ENCODE measurements at regions of chr2 and their contacts with region 1.

Region 1: DNA sequence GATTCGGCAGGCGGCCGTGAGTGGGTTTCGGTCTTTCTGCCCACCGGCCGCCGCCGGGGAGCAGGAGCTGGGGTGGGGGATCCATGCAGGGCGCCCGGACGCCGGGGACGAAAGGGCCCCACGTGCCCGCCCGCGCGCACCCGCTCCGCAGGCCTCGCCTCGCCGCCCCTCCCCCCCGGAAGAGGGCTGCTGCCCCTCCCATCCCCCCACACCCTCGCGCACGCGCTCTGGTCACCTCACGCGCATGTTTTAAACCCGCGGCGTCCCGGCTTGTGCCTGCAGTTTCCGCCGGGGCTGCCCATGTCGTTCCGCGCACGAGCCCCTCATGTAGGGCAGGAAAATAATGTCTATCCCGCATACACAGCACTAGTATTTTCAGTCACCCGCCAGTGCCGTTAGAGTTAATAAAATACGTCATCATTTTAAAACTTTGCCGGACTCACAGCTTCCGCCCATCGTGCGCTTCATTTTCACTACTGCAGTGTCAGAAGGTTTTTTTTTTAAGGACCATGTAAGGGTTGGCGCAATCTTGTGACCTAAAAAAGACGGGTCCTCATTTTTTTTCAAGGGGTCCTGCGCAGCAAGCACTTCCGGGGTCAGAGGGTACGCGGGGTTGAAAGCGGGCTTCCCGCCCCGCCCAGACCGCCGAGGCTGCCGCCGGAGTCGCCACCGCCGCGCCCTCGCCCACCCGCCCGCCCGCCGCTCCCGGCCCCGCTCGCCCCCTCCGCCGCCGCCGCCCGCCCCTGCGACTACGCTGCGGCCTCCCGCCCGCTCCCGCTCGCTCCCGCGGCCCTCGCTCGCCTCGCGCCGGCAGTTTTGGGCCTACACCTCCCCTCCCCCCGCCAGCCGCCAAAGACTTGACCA is at the start of gene PCBP1:
- DNase-seq: peak; percentile 96
- H3K4me3 Mint-ChIP-seq: peak within 1 kb of the TSS; percentile 97
- H3K27ac Mint-ChIP-seq: peak within 1 kb of the TSS; percentile 100
- H3K4me1 Mint-ChIP-seq: peaks cover 50% of the 10 kb centered on the region
- H3K27me3 Mint-ChIP-seq: no peaks in the 10 kb centered on the region
- total RNA-seq, gene PCBP1: 363 to 374 TPM

Region 2: DNA sequence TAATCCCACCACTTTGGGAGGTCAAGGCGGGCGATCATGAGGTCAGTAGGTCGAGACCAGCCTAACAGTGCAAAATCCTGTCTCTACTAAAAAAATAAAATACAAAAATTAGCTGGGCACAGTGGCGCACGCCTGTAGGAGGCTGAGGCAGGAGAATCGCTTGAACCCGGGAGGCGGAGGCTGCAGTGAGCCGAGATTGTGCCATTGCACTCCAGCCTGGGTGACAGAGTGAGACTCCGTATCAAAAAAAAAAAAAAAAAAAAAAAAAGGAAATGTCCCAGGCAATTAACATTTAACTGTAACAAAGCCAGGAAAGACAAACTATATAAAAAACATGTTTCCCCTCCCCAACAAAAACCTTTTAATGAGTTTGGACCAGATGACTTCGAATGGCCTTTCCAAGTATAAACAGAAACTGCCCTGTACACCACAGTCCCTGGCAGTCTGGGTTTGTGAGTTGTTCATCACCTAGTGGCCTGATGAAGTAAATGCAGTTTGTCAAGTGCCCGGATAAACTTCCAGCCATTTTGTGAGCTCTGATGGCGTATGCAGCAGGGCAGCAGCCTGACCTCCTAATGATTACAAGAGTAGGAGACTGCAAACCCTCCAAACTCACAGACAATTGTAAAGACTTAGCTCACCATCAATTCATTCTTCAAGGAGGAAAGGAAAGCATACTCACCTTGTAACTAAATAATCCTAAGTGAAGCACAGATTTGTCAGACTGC is 16.4 kb before region 1 on chr2:
- CTCF ChIA-PET with region 1: interaction called, 76 read pairs
- intact Hi-C with region 1: loop called (anchors 1 kb)
- DNase-seq: peak; percentile 76
- H3K4me3 Mint-ChIP-seq: peak overlapping the region; percentile 54
- H3K27ac Mint-ChIP-seq: peak overlapping the region; percentile 94
- H3K4me1 Mint-ChIP-seq: peaks cover 57% of the 10 kb centered on the region
- H3K27me3 Mint-ChIP-seq: no peaks in the 10 kb centered on the region

Region 3: GRCh38 chr2:70124983-70125480 is 38.0 kb after region 1 on chr2:
- CTCF ChIA-PET with region 1: interaction called, 11 read pairs
- intact Hi-C with region 1: loop called (anchors 1 kb)
- DNase-seq: peak; percentile 58
- H3K4me3 Mint-ChIP-seq: peak overlapping the region; percentile 92
- H3K27ac Mint-ChIP-seq: peak overlapping the region; percentile 100
- H3K4me1 Mint-ChIP-seq: peaks cover 68% of the 10 kb centered on the region
- H3K27me3 Mint-ChIP-seq: no peaks in the 10 kb centered on the region

Region 4: DNA sequence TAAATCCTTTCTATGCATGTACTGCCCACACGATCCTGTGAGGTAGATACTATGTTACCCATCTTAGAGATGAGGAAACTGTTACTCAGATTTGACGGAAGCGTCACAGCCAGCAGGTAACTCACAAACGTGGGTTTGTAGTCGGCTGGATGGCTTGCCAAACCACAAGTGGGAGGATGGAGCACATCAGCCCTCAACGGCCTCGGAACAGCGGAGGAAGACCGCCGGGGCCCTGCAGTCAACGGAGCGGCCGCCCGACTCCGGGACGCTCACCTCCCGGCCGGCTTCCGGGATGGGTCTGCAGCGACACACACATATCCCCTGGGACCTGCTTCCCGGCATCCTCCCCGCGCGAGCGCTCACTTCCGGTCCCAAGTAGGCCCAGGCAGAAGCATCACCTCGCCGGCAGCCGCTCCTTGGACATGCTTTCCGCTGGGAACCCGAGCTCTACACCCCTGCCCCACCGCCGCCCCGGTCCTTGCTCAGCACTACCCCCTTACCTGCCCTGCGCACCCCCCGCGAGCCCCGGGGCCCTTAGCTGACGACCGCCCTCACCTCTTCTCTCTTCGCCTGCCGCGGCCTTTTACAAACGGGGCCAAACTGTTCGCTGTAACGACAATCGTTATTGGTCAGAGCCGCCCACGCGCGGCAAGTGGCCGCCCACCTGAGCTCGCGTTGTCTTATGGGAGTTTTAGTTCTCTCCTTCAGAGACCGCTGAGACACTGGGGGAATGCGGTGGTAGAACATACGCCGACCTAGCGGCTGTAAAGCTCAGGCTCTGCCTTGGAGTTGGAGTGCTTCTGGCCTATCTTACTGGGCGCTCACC is 103.6 kb after region 1 on chr2 and contains the start of gene C2orf42:
- CTCF ChIA-PET with region 1: interaction called, 4 read pairs
- intact Hi-C with region 1: loop called (anchors 1 kb)
- DNase-seq: peak; percentile 98
- H3K4me3 Mint-ChIP-seq: peak within 1 kb of the TSS; percentile 87
- H3K27ac Mint-ChIP-seq: peak within 1 kb of the TSS; percentile 98
- H3K4me1 Mint-ChIP-seq: peaks cover 21% of the 10 kb centered on the region
- H3K27me3 Mint-ChIP-seq: no peaks in the 10 kb centered on the region
- total RNA-seq, gene C2orf42: 19.2 to 23.3 TPM

Measured in activated naive CD4-positive, alpha-beta T cell treated with anti-CD3 and anti-CD28 coated beads for 36 hours (primary cell).